AG04450 (cell line): ENCODE measurements at regions of chr20 and their contacts with region 1.

Region 1: DNA sequence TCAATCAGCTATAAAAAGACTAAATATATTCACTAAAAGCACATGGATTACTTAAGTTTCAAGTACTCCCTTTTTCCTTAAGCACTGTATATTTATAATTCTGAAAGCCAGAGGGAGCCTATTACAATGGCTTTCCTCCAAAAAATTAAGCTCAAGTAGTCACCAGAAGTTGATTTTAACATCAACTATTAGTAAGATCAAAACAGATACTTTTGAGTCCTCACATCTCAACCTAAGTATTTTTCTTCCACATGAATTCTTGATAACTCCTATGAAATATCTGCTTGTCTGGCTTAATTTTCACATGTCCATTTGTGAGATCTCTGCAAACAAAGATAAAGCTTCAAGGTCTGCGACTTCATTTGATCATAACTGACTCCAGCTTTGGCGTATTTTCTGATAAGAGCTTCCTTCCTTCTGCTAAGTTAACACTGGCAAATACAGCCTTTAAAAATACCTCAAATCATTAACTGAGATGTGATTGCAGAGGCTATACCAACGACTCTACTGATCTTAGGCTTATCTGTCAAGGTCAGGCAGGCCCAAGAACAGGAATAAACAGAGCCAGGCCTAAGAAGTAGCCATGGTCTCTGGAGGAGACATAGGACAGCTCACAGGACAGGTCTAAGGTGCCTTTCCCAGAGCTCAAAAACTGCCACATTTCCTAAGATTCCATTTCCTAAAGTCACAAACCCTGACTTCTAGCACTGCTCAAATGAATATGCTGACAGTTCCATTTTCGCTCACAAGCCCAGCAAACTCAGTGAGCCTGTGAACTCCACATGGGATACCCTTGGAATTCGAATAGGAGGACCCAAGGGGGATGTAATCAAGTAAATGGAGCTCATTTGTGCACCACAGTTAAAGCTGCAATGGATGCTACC is 10.0 kb downstream of the SNX5 start:
- DNase-seq: no peak
- H3K4me3 ChIP-seq: no peak overlapping the region
- H3K27ac ChIP-seq: peak overlapping the region; percentile 71
- H3K27me3 ChIP-seq: no peaks in the 10 kb centered on the region
- CTCF ChIP-seq: peak; percentile 38

Region 2: GRCh38 chr20:17898548-17898994 is 60.0 kb before region 1 on chr20:
- CTCF ChIA-PET with region 1: interaction called, 12 read pairs
- POLR2A ChIA-PET with region 1: no interaction called
- DNase-seq: peak; percentile 44
- H3K4me3 ChIP-seq: no peak overlapping the region
- H3K27ac ChIP-seq: no peak overlapping the region
- H3K27me3 ChIP-seq: no peaks in the 10 kb centered on the region
- CTCF ChIP-seq: peak; percentile 98

Region 3: GRCh38 chr20:17946572-17947473 is 11.8 kb before region 1 on chr20:
- CTCF ChIA-PET with region 1: interaction called, 12 read pairs
- POLR2A ChIA-PET with region 1: no interaction called
- DNase-seq: no peak
- H3K4me3 ChIP-seq: no peak overlapping the region
- H3K27ac ChIP-seq: no peak overlapping the region
- H3K27me3 ChIP-seq: no peaks in the 10 kb centered on the region
- CTCF ChIP-seq: no peak

Region 4: GRCh38 chr20:17968366-17969279 is 10.0 kb after region 1 on chr20 and contains the starts of genes MGME1 and SNX5:
- CTCF ChIA-PET with region 1: interaction called, 10 read pairs
- POLR2A ChIA-PET with region 1: interaction called, 10 read pairs
- DNase-seq: peak; percentile 98
- H3K4me3 ChIP-seq: peak within 1 kb of the TSS; percentile 96
- H3K27ac ChIP-seq: peak within 1 kb of the TSS; percentile 100
- H3K27me3 ChIP-seq: no peaks in the 10 kb centered on the region
- CTCF ChIP-seq: no peak
- polyA plus RNA-seq, gene MGME1: 9.9 and 13.5 TPM in 2 replicates
- polyA plus RNA-seq, gene SNX5: 109 and 150 TPM in 2 replicates

Region 5: DNA sequence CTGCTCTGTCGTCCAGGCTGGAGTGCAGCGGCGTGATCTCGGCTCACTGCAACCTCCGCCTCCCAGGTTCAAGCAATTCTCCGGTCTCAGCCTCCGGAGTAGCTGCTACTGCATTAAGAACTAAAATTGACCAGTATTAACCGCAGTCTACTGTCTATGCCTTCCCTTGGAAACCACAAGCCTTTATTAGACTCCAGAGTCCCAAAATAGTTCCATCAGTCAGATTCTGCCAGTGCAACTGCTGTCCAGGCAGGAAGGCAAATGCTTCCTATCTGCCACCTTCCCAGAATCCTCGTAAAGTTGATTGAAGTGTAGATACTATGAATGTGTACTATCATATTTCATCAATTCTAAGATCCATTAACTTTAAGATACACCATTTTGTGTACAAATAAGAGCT is 195.7 kb after region 1 on chr20:
- CTCF ChIA-PET with region 1: no interaction called
- POLR2A ChIA-PET with region 1: no interaction called
- DNase-seq: no peak
- H3K4me3 ChIP-seq: no peak overlapping the region
- H3K27ac ChIP-seq: no peak overlapping the region
- H3K27me3 ChIP-seq: no peaks in the 10 kb centered on the region
- CTCF ChIP-seq: no peak